ENCODE measurements at regions of chr13 and their contacts with region 1.

Region 1: GRCh38 chr13:30617315-30618185 is at the start of gene USPL1:
- DNase-seq: peak; percentile 92 to 99 (median 99)
- ATAC-seq: peak; percentile 95
- H3K4me3 ChIP-seq: peak within 1 kb of the TSS; percentile 84
- H3K4me3 Mint-ChIP-seq: no peak within 1 kb of the TSS
- H3K27ac ChIP-seq: peak within 1 kb of the TSS; percentile 97
- H3K27ac Mint-ChIP-seq: no peak within 1 kb of the TSS
- H3K4me1 ChIP-seq: peaks cover 11 to 13% of the 10 kb centered on the region in 2 donors
- H3K4me1 Mint-ChIP-seq: peaks cover 13 to 53% (median 36%) of the 10 kb centered on the region in 7 donors
- H3K27me3 ChIP-seq: no peaks in the 10 kb centered on the region
- H3K27me3 Mint-ChIP-seq: no peaks in the 10 kb centered on the region
- total RNA-seq, gene USPL1: 22.4 to 34.7 (median 30.4) TPM

Region 2: DNA sequence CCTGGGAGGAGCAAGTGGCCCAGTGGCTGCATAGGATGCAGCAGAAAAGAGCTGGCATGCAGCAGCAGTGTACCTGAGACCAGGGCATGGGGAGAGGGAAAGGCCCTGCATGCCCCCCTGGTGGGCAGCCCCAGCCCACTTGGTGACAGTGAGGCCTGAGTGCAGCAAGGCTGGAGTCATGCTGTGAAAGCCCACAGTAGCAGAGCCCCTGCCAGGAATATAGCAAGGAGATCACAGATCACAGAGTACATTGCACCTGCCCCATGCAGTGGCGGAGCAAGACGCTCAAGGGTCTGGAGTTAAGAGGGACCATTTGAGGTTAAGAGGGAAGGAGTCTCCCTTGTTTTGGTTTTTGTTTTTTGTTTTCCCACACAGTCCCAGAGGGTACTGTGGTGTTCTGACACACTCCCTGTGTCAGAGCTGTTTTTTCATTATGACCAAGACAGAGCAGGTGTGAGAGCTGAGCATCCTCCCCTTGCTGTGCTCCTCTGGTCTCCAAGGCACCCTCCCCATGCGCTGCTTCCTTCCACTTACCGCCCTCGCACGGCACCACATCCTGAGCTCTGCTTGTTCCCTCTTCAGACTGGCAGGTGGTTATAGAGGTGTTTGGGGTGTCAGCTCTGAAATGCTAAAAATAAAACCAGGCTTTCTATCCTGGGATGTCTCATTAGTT is 682.1 kb before region 1 on chr13:
- CTCF ChIA-PET with region 1: no interaction called
- POLR2A ChIA-PET with region 1: interaction called, 12 read pairs
- intact Hi-C with region 1: no loop called
- DNase-seq: peak; percentile 38 to 84 (median 77)
- ATAC-seq: peak; percentile 93
- H3K4me3 ChIP-seq: peak overlapping the region; percentile 61
- H3K4me3 Mint-ChIP-seq: peak overlapping the region; percentile 67 to 95 (median 91)
- H3K27ac ChIP-seq: peak overlapping the region; percentile 71
- H3K27ac Mint-ChIP-seq: peak overlapping the region; percentile 81 to 96 (median 93)
- H3K4me1 ChIP-seq: peaks cover 38 to 43% of the 10 kb centered on the region in 2 donors
- H3K4me1 Mint-ChIP-seq: peaks cover 32 to 53% (median 51%) of the 10 kb centered on the region in 7 donors
- H3K27me3 ChIP-seq: no peaks in the 10 kb centered on the region
- H3K27me3 Mint-ChIP-seq: no peaks in the 10 kb centered on the region

Region 3: GRCh38 chr13:30371649-30372265 is 245.8 kb before region 1 on chr13:
- CTCF ChIA-PET with region 1: interaction called, 3 read pairs
- POLR2A ChIA-PET with region 1: interaction called, 30 read pairs
- intact Hi-C with region 1: loop called (anchors 1 to 2 kb)
- DNase-seq: peak; percentile 22 to 92 (median 89)
- ATAC-seq: peak; percentile 78
- H3K4me3 ChIP-seq: peak overlapping the region; percentile 37
- H3K4me3 Mint-ChIP-seq: peak overlapping the region; percentile 51 to 91 (median 76)
- H3K27ac ChIP-seq: peak overlapping the region; percentile 58
- H3K27ac Mint-ChIP-seq: peak overlapping the region; percentile 90 to 98 (median 95)
- H3K4me1 ChIP-seq: peaks cover 73% of the 10 kb centered on the region in 2 donors
- H3K4me1 Mint-ChIP-seq: peaks cover 68 to 87% (median 78%) of the 10 kb centered on the region in 7 donors
- H3K27me3 ChIP-seq: no peaks in the 10 kb centered on the region
- H3K27me3 Mint-ChIP-seq: no peaks in the 10 kb centered on the region

Region 4: GRCh38 chr13:30572859-30573275 is 44.7 kb before region 1 on chr13:
- CTCF ChIA-PET with region 1: interaction called, 3 read pairs
- POLR2A ChIA-PET with region 1: interaction called, 6 read pairs
- intact Hi-C with region 1: loop called (anchors 1 to 2 kb)
- DNase-seq: peak in 7 of 9 donors; percentile 19 to 65 (median 49)
- ATAC-seq: peak; percentile 69
- H3K4me3 ChIP-seq: peak overlapping the region; percentile 55
- H3K4me3 Mint-ChIP-seq: peak overlapping the region; percentile 66 to 88 (median 81)
- H3K27ac ChIP-seq: peak overlapping the region; percentile 81
- H3K27ac Mint-ChIP-seq: peak overlapping the region; percentile 88 to 97 (median 94)
- H3K4me1 ChIP-seq: peaks cover 13 to 24% of the 10 kb centered on the region in 2 donors
- H3K4me1 Mint-ChIP-seq: peaks cover 14 to 42% (median 36%) of the 10 kb centered on the region in 7 donors
- H3K27me3 ChIP-seq: no peaks in the 10 kb centered on the region
- H3K27me3 Mint-ChIP-seq: peaks cover 0 to 3% (median 0%) of the 10 kb centered on the region in 5 donors

Region 5: DNA sequence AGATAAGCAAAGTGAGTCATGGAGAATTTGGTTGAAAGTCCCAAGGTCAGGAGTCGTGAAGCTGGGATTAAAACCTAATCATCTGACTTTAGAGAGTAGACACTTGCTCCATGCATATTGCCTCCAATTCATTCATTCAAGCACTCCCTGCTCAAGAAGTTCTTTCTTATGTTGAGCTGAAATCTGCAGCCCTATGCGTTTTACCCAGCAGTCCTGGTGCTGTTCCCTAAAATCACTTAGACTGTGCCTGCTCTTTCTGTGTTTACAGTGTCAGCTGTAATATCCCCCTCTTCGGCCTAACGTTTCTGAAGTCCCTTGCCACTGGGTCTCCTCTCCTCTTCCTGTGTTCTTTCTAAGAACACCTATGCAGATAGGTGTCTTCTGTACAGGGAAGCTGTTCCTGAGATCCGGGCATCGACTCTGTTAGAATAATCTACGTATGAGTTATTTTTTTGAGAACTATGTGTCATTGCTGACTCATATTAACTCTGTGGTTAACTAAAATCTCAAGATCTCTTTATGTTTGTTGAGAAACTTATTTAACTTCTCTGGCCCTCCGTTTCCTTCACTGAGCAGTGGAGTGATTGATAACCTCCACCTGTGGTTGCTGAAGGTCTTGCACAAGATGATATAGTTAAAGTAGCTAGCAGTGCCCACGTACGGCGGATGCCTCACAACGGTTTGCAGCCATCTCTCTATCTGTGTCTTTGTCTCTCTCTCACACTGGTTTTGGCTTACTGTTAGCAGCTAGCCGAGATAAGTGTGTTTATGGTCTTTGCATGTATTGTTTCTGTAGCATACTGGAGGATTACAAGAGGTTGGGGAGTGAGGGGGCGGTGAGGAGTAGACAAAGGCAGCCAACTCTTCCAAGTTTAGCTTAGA is 122.5 kb after region 1 on chr13:
- CTCF ChIA-PET with region 1: no interaction called
- POLR2A ChIA-PET with region 1: interaction called, 20 read pairs
- intact Hi-C with region 1: loop called (anchors 1 to 2 kb)
- DNase-seq: peak in 8 of 9 donors; percentile 16 to 61 (median 32)
- ATAC-seq: peak; percentile 47
- H3K4me3 ChIP-seq: peak overlapping the region; percentile 29
- H3K4me3 Mint-ChIP-seq: peak overlapping the region; percentile 79 to 87 (median 82)
- H3K27ac ChIP-seq: no peak overlapping the region
- H3K27ac Mint-ChIP-seq: peak overlapping the region; percentile 7 to 93 (median 66)
- H3K4me1 ChIP-seq: peaks cover 59 to 60% of the 10 kb centered on the region in 2 donors
- H3K4me1 Mint-ChIP-seq: peaks cover 68 to 81% (median 79%) of the 10 kb centered on the region in 7 donors
- H3K27me3 ChIP-seq: no peaks in the 10 kb centered on the region
- H3K27me3 Mint-ChIP-seq: no peaks in the 10 kb centered on the region

Region 6: DNA sequence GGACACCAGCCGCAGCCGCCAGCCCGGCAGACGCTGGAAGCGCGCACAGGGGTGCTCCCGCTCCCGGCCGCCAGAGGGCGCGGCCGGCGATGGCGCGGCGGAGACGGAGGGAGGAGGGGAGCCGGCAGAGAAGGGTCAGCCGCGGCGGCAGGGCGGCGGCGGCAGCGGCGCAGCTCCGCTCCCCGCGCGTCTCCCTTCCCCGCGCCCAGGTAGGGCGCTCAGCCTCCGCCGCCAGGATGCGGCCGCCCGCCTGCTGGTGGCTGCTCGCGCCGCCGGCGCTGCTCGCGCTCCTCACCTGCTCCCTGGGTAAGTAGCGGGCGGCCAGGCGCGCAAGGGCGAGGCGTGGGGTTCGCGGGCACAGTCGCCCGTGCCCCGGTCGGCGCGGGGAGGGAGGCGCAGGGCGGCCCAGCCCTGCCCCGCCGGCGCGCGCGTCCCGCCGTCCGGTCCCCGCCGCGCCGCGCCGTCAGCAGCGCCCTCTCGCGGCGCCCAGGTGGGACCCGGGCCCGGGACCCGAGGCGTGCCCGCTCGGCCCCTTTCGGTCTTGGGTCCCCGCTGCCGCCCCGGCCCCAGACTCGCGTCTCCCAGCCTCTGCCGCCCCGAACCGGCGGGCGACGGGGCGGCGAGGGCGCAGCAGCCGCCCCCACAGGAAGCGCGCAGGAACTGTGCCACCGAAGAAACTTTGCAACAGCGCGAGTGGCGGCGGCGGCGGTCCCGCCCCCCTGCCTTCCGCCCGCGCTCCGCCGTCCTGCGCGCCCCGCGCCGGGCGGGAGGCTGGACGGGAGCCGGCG is 582.5 kb after region 1 on chr13 and contains the start of gene B3GLCT:
- CTCF ChIA-PET with region 1: no interaction called
- POLR2A ChIA-PET with region 1: no interaction called
- intact Hi-C with region 1: loop called in 1 of 2 experiments (anchors 1 kb)
- DNase-seq: peak; percentile 70 to 90 (median 86)
- ATAC-seq: peak; percentile 88
- H3K4me3 ChIP-seq: peak within 1 kb of the TSS; percentile 65
- H3K4me3 Mint-ChIP-seq: peak within 1 kb of the TSS; percentile 83 to 92 (median 89)
- H3K27ac ChIP-seq: peak within 1 kb of the TSS; percentile 82
- H3K27ac Mint-ChIP-seq: peak within 1 kb of the TSS; percentile 78 to 94 (median 92)
- H3K4me1 ChIP-seq: peaks cover 5 to 6% of the 10 kb centered on the region in 2 donors
- H3K4me1 Mint-ChIP-seq: peaks cover 13 to 28% (median 23%) of the 10 kb centered on the region in 7 donors
- H3K27me3 ChIP-seq: no peaks in the 10 kb centered on the region
- H3K27me3 Mint-ChIP-seq: peaks cover 0 to 19% (median 0%) of the 10 kb centered on the region in 5 donors
- total RNA-seq, gene B3GLCT: 3.7 to 4.6 (median 4.4) TPM